ENCODE measurements at regions of chr13 and their contacts with region 1.

Region 1: GRCh38 chr13:48885027-48885395 is 90.7 kb upstream of the FNDC3A start:
- DNase-seq: no peak
- ATAC-seq: no peak
- H3K4me3 Mint-ChIP-seq: peak overlapping the region; percentile 26
- H3K27ac Mint-ChIP-seq: peak overlapping the region; percentile 86
- H3K4me1 Mint-ChIP-seq: peaks cover 36% of the 10 kb centered on the region
- H3K27me3 Mint-ChIP-seq: no peaks in the 10 kb centered on the region

Region 2: DNA sequence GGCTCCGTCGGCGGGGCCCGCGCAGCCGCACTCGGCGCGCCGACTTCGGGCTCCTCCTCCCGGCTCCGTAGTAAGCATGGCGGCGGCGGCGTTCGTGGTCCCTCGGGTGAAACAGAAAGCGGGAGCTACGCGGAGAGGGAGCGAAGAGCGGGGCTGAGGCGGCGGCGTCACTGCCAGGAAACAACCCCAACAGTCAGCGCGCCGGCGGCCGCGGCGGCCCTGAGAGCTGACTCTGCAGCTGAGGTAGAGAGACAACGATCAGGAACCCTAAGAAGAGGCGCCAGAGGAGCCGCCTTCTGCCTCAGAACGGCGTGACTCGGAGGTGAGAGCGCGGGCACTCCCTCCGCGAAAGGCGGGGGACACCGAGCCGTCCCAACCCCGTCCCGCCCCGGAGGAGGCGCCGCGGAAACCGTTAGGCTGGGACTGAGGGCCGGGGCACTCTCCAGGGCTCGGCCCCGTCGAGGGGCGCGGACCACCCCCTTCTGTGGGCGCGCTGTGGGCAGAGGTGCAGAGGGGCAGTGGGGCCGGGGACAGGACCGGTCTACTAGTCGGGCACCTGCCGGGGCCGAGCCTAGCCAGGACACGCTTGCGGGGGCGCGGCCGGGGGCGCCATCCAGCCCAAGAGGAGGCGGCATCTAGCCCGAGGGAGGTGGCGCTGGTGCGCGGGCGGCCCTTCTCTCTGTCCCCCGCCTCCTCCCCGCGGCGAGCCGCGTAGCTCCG is 91.0 kb after region 1 on chr13 and contains the start of gene FNDC3A:
- POLR2A ChIA-PET with region 1: interaction called, 12 read pairs
- DNase-seq: peak; percentile 90
- ATAC-seq: peak; percentile 83
- H3K4me3 Mint-ChIP-seq: peak within 1 kb of the TSS; percentile 92
- H3K27ac Mint-ChIP-seq: peak within 1 kb of the TSS; percentile 98
- H3K4me1 Mint-ChIP-seq: peaks cover 31% of the 10 kb centered on the region
- H3K27me3 Mint-ChIP-seq: no peaks in the 10 kb centered on the region
- total RNA-seq, gene FNDC3A: 30.3 to 31.8 TPM